Heart left ventricle (tissue), 16 donors: ENCODE measurements at regions of chr11 and their contacts with region 1.

Region 1: DNA sequence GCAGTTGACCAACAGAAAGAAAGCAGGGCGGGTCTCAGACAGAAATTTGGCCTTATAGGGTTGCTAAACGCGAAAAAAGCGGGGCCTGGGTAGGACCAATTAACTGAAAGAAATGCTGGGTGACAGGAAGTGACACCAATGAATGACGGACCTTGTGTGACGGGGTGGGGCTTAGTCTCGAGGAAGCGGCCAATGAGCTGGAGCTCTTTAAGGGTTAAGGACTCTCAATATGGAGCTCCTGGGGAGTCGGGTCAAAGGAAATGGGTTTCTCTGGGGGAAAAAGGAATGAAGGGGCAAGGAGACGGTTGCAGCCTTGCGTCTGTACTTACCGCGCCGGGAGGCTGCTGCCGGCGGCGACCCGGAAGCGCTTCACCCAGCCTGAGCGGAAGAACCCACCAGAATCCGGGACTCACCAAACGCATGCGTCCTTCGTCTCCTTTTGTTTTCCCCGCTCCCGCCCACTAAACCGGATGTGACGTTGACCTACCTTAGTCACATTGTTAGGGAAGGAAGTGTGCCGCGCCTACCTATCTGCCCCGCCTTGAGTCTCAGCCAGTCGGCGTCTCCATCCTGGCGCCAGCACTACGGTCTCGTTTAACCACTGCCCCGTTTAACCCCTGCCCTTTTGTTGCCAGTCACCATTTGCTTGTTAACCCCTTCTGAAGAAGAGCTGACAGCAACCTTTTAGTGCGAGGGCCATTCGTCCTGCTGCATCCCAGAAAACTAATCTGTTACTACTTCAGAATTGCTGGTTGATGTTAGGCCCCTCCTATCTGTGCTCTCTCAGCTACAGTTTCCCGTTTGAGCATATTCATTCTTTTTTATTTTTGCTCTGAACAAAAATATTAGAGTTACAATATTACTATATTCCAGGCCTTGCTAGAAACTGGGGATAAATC is at the start of gene ANAPC15:
- DNase-seq: peak; percentile 97 to 99 (median 99)
- ATAC-seq: peak; percentile 94 to 96 (median 95)
- H3K4me3 ChIP-seq: peak within 1 kb of the TSS; percentile 47 to 78 (median 70)
- H3K27ac ChIP-seq: peak within 1 kb of the TSS; percentile 91 to 100 (median 98)
- H3K4me1 ChIP-seq: peaks cover 0 to 19% (median 11%) of the 10 kb centered on the region in 12 donors
- H3K27me3 ChIP-seq: peaks cover 0 to under 1% (median 0%) of the 10 kb centered on the region in 9 donors
- CTCF ChIP-seq: peak in 1 of 12 donors; percentile 16
- POLR2A ChIP-seq: peak in 1 of 2 donors; percentile 86
- total RNA-seq, gene ANAPC15: 35.6 to 48.7 (median 40.1) TPM

Region 2: DNA sequence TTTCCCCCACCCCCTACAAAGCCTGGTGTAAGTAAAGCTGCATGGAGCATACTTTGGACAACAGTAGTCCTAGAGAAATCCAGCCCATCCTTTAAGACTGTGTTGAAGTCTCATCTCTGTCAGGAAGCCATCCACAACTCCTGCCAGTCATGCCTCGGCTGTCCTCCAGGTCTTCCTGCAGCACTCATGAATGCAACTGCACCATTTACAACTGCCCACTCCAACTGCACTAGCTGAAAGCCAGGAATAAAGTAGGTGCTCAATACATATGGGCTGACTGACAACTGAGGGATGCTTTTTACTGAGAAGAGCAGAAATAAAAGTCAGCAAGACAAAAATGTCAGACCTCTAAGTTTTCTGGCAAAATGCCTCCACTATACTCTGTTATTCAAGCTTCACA is 86.5 kb before region 1 on chr11:
- intact Hi-C with region 1: no loop called
- DNase-seq: no peak
- ATAC-seq: no peak
- H3K4me3 ChIP-seq: no peak overlapping the region
- H3K27ac ChIP-seq: peak overlapping the region in 3 of 12 donors; percentile 33 to 72 (median 43)
- H3K4me1 ChIP-seq: peaks cover 4 to 63% (median 41%) of the 10 kb centered on the region in 12 donors
- H3K27me3 ChIP-seq: no peaks in the 10 kb centered on the region
- CTCF ChIP-seq: no peak
- POLR2A ChIP-seq: no peak

Region 3: DNA sequence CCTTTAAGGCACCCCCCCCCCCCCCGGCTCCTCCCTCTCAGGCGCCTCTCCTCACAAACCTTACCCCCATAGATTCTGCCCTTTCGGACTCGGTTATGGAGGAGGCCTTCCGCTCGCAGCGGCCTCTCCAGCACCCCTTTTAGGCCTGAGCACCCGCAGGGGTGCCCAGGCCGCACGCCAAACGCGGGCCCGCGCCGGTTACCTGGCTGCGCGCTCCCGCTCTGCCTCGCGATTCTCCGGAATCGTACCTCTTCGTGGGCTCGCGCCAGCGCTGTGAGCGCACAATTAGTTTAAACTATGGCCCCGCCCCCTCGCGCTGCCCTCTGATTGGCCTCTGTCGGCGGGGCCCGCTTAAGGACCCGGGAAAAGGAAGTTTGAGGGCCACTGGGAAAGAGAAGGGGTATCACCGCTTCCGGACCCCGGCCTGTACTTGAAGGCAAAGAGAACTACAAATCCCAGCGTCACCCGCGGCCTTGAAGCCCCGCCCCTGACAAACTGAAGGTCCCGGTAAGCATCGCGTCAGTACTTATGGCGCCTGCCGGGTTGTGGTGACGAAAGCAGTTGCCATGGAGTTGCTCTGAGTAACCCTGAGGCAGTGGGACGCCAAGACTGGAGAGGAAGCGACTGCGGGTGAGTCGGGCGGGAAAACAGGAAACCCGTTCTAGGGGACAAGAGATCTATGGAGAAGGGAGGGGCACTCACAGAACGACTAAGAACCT is 32.2 kb before region 1 on chr11 and contains the starts of genes LRRC51 and NUMA1:
- intact Hi-C with region 1: loop called in 3 of 10 experiments (anchors 1 to 2 kb)
- DNase-seq: peak; percentile 99 to 100 (median 99)
- ATAC-seq: peak; percentile 97 to 99 (median 98)
- H3K4me3 ChIP-seq: peak within 1 kb of the TSS; percentile 70 to 94 (median 82)
- H3K27ac ChIP-seq: peak within 1 kb of the TSS; percentile 81 to 93 (median 87)
- H3K4me1 ChIP-seq: peaks cover 0 to 44% (median 16%) of the 10 kb centered on the region in 12 donors
- H3K27me3 ChIP-seq: no peaks in the 10 kb centered on the region
- CTCF ChIP-seq: no peak
- POLR2A ChIP-seq: peak in 1 of 2 donors; percentile 65
- total RNA-seq, gene LRRC51: 2.0 to 8.3 (median 4.5) TPM
- total RNA-seq, gene NUMA1: 62.7 to 193 (median 101) TPM

Region 4: GRCh38 chr11:72222907-72223614 is 110.5 kb after region 1 on chr11:
- intact Hi-C with region 1: loop called in 3 of 10 experiments (anchors 1 to 5 kb)
- DNase-seq: peak; percentile 96 to 98 (median 97)
- ATAC-seq: peak; percentile 89 to 96 (median 92)
- H3K4me3 ChIP-seq: peak overlapping the region; percentile 58 to 99 (median 88)
- H3K27ac ChIP-seq: peak overlapping the region; percentile 90 to 100 (median 99)
- H3K4me1 ChIP-seq: peaks cover 0 to 52% (median 17%) of the 10 kb centered on the region in 12 donors
- H3K27me3 ChIP-seq: peaks cover 0 to 4% (median 0%) of the 10 kb centered on the region in 9 donors
- CTCF ChIP-seq: peak; percentile 17 to 68 (median 46)
- POLR2A ChIP-seq: peak; percentile 86 to 91

Region 5: DNA sequence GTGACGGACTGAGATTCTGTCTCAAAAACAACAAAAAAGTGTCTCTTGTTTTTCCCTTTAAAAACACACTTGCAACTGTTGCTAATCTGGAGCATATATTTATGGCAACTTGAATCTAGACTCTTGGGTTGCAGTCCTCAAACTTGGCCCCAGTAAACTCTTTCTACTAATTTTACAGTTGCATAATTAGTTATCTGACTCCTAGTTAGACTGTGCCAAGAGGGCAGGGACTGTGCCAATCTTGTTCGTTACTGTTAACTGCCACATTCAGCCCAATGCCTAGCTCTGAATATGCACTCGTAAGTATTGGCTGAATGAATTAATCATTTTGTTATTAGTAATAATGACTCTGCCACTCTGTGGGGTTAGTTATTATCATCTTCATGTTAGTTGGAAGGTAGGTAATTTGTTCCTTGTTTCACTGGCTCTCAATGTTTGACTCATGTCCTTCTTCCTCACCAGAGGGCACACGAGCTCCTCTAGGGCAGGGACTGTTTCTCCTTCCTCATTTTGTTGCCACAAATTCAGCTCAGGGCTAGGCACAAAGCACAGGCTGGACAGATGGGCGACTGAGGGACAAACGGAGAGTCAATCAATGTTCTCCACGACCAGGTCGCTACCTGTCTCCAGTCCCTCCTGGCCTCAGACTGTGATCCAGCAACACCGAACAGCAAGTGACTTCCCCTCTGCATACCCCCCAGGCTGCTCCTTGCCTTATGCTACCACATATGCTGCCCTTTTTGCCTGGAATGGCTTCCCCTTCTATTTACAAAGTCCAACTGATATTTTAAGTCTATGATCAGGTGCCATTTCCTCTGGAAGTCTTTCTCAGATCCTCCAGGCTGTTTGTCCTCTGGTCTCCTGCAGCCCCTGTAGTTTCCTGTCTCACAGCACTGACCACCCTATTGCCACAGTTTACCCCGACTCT is 312.7 kb after region 1 on chr11:
- intact Hi-C with region 1: loop called in 3 of 10 experiments (anchors 10 kb)
- DNase-seq: no peak
- ATAC-seq: peak in 3 of 4 donors; percentile 50 to 72 (median 62)
- H3K4me3 ChIP-seq: no peak overlapping the region
- H3K27ac ChIP-seq: no peak overlapping the region
- H3K4me1 ChIP-seq: peaks cover 0 to 17% (median 0%) of the 10 kb centered on the region in 12 donors
- H3K27me3 ChIP-seq: no peaks in the 10 kb centered on the region
- CTCF ChIP-seq: no peak
- POLR2A ChIP-seq: no peak

Region 6: GRCh38 chr11:72430741-72431570 is 318.4 kb after region 1 on chr11:
- intact Hi-C with region 1: loop called in 3 of 10 experiments (anchors 10 kb)
- DNase-seq: peak in 3 of 5 donors; percentile 44 to 49 (median 46)
- ATAC-seq: peak in 2 of 4 donors; percentile 16 to 31
- H3K4me3 ChIP-seq: no peak overlapping the region
- H3K27ac ChIP-seq: no peak overlapping the region
- H3K4me1 ChIP-seq: peaks cover 0 to 41% (median 14%) of the 10 kb centered on the region in 12 donors
- H3K27me3 ChIP-seq: no peaks in the 10 kb centered on the region
- CTCF ChIP-seq: peak; percentile 61 to 81 (median 72)
- POLR2A ChIP-seq: no peak